Activated naive CD4-positive, alpha-beta T cell treated with anti-CD3 and anti-CD28 coated beads for 36 hours (primary cell): ENCODE measurements at regions of chr7 and their contacts with region 1.

Region 1: GRCh38 chr7:20440472-20441105 is 109.9 kb downstream of the ITGB8 start:
- DNase-seq: peak; percentile 33
- H3K4me3 Mint-ChIP-seq: no peak overlapping the region
- H3K27ac Mint-ChIP-seq: no peak overlapping the region
- H3K4me1 Mint-ChIP-seq: no peaks in the 10 kb centered on the region
- H3K27me3 Mint-ChIP-seq: peaks cover 2% of the 10 kb centered on the region

Region 2: DNA sequence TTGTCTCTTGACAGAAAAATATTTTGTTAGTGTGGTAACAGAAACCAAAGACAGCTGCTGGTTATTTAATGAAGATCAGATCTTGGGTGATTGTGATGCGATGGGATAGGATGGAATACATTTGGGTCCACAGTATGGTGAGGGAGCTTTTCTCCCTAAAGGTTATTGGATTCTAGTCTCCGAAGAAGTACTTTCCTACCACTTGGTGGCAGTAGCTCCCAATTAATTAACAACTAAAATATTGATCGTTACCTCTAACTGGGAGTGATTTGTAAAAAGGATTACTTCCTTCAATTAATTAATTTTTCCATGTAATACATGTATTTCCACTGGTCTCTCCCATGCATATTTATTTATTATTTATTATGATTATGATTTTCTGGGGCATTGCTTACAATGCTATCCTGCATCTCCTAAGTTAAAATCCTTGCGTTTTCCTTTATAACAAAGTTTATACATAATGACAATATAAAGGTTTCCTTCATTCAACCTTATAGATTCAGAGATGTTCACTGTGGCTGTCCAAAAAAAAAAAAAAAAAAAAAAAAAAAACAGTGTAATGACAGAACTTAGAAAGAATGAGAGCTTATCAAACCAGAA is 692.7 kb before region 1 on chr7:
- CTCF ChIA-PET with region 1: no interaction called
- intact Hi-C with region 1: loop called (anchors 5 kb)
- DNase-seq: no peak
- H3K4me3 Mint-ChIP-seq: no peak overlapping the region
- H3K27ac Mint-ChIP-seq: no peak overlapping the region
- H3K4me1 Mint-ChIP-seq: no peaks in the 10 kb centered on the region
- H3K27me3 Mint-ChIP-seq: peaks cover 7% of the 10 kb centered on the region